Activated CD4-positive, alpha-beta memory T cell treated with anti-CD3 and anti-CD28 coated beads for 36 hours (primary cell): ENCODE measurements at regions of chr3 and their contacts with region 1.

Region 1: GRCh38 chr3:152405915-152406802 is 137.4 kb downstream of the MBNL1 start:
- DNase-seq: no peak
- H3K4me3 Mint-ChIP-seq: no peak overlapping the region
- H3K27ac Mint-ChIP-seq: peak overlapping the region; percentile 72
- H3K4me1 Mint-ChIP-seq: peaks cover 74% of the 10 kb centered on the region
- H3K27me3 Mint-ChIP-seq: no peaks in the 10 kb centered on the region

Region 2: GRCh38 chr3:152213203-152213602 is 193.0 kb before region 1 on chr3:
- CTCF ChIA-PET with region 1: no interaction called
- POLR2A ChIA-PET with region 1: no interaction called
- intact Hi-C with region 1: no loop called
- DNase-seq: no peak
- H3K4me3 Mint-ChIP-seq: no peak overlapping the region
- H3K27ac Mint-ChIP-seq: peak overlapping the region; percentile 20
- H3K4me1 Mint-ChIP-seq: peaks cover 58% of the 10 kb centered on the region
- H3K27me3 Mint-ChIP-seq: no peaks in the 10 kb centered on the region

Region 3: GRCh38 chr3:152302521-152303021 is 103.6 kb before region 1 on chr3:
- CTCF ChIA-PET with region 1: no interaction called
- POLR2A ChIA-PET with region 1: no interaction called
- intact Hi-C with region 1: no loop called
- DNase-seq: no peak
- H3K4me3 Mint-ChIP-seq: peak overlapping the region; percentile 43
- H3K27ac Mint-ChIP-seq: peak overlapping the region; percentile 52
- H3K4me1 Mint-ChIP-seq: peaks cover 83% of the 10 kb centered on the region
- H3K27me3 Mint-ChIP-seq: no peaks in the 10 kb centered on the region

Region 4: DNA sequence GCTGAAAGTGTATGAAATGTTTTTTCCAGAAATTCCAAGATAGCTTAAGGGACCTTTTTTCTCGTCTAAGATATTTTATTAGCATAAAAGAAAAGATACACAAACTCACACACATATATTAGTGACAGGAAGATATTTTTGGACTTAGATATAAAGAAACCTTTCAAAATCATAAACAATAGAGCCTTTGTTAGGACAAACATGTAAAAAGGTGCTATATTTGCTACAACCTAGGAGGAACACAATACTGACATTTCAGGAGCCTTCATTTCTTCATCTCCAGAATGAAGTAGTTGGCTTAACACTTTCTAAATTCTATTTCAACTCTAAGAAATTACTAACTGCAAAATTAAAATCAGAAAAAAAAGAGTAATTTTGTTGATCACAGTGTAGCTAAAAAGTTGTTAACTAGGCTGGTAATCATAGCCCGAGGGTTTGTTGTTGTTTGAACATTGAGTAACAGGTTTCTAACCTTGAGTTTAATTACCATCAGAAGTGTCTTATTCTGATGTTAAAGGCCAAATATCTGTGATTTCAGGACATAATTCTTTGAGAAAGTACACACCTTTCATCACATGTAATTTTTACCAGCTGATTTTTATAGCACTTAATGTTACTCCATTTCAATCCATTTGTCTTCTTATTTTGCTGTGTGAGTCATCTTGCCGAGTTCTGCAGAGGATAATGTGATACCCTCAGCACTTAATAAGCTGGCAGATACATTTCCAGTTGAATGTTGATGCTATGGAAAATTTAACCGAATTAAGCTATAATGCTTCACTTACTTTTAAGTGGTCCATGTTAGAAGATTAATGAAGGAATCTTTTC is 40.2 kb before region 1 on chr3:
- CTCF ChIA-PET with region 1: no interaction called
- POLR2A ChIA-PET with region 1: no interaction called
- intact Hi-C with region 1: loop called (anchors 2 kb)
- DNase-seq: no peak
- H3K4me3 Mint-ChIP-seq: no peak overlapping the region
- H3K27ac Mint-ChIP-seq: peak overlapping the region; percentile 19
- H3K4me1 Mint-ChIP-seq: peaks cover 86% of the 10 kb centered on the region
- H3K27me3 Mint-ChIP-seq: no peaks in the 10 kb centered on the region

Region 5: DNA sequence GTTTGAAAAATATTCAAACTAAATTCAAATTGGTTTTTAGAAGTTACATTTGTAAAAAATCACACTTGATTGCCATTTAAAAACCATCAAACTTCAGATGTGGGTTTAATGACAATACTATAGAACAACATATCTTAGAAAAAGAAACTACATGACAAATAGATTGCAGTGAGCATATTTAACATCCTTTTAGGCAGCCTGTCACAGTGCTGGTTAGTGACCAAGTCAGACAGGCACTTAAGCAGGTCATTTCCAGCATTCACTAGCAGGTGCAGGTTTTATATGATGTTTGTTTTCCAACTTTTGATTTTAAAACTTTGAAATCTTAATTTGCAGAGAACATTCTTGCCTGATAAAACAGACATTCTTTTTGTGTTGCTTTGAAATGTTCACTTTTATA is 21.7 kb before region 1 on chr3:
- CTCF ChIA-PET with region 1: interaction called, 3 read pairs
- POLR2A ChIA-PET with region 1: no interaction called
- intact Hi-C with region 1: loop called (anchors 1 kb)
- DNase-seq: no peak
- H3K4me3 Mint-ChIP-seq: no peak overlapping the region
- H3K27ac Mint-ChIP-seq: peak overlapping the region; percentile 73
- H3K4me1 Mint-ChIP-seq: peaks cover 81% of the 10 kb centered on the region
- H3K27me3 Mint-ChIP-seq: no peaks in the 10 kb centered on the region

Region 6: GRCh38 chr3:152394246-152394645 is 11.9 kb before region 1 on chr3:
- CTCF ChIA-PET with region 1: interaction called, 5 read pairs
- POLR2A ChIA-PET with region 1: interaction called, 5 read pairs
- intact Hi-C with region 1: loop called (anchors 1 kb)
- DNase-seq: no peak
- H3K4me3 Mint-ChIP-seq: no peak overlapping the region
- H3K27ac Mint-ChIP-seq: no peak overlapping the region
- H3K4me1 Mint-ChIP-seq: peaks cover 64% of the 10 kb centered on the region
- H3K27me3 Mint-ChIP-seq: no peaks in the 10 kb centered on the region

Region 7: GRCh38 chr3:152419748-152420147 is 13.6 kb after region 1 on chr3:
- CTCF ChIA-PET with region 1: interaction called, 4 read pairs
- POLR2A ChIA-PET with region 1: no interaction called
- intact Hi-C with region 1: loop called (anchors 2 kb)
- DNase-seq: peak; percentile 77
- H3K4me3 Mint-ChIP-seq: peak overlapping the region; percentile 3
- H3K27ac Mint-ChIP-seq: peak overlapping the region; percentile 80
- H3K4me1 Mint-ChIP-seq: peaks cover 78% of the 10 kb centered on the region
- H3K27me3 Mint-ChIP-seq: no peaks in the 10 kb centered on the region

Region 8: DNA sequence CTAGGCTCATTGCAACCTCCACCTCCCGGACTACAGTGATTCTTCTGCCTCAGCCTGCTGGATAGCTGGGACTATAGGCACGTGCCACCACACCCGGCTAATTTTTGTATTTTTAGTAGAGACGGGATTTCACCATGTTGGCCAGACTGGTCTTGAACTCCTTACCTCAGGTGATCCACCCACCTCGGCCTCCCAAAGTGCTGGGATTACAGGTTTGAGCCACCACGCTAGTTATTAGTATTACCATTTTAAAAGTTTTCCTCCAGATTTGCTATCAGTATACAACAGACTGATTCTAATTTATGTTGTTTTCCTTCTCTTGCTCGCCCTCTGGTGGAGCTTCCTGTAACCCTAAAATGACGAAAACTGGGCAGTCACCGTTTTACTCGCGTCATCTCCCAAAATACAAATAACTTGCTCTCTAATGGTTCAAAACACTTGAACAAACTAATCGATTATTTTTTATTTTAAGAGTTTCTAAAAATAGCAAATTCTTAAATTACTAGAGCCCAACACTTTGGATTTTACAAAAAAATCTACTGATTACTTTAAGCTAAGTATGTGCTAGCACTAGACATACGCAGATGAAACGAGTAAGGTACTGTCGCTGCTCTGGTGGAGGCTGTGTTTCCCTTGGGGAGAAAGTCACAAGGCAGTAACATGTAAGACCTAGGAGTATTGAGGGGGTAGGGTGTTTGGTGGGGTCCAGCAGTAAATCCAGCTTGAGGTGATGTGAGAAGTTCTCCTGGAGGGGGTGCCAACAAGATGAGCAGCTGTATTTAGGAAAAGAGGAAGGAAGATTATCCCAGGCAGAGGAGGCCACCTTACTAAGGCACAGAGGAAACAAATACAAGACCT is 65.9 kb after region 1 on chr3:
- CTCF ChIA-PET with region 1: no interaction called
- POLR2A ChIA-PET with region 1: no interaction called
- intact Hi-C with region 1: no loop called
- DNase-seq: peak; percentile 80
- H3K4me3 Mint-ChIP-seq: peak overlapping the region; percentile 39
- H3K27ac Mint-ChIP-seq: peak overlapping the region; percentile 39
- H3K4me1 Mint-ChIP-seq: peaks cover 13% of the 10 kb centered on the region
- H3K27me3 Mint-ChIP-seq: no peaks in the 10 kb centered on the region